Caco-2 (cell line): ENCODE measurements at regions of chr7 and their contacts with region 1.

Region 1: GRCh38 chr7:70040970-70041766 is 442.9 kb downstream of the AUTS2 start:
- DNase-seq: no peak
- H3K4me3 ChIP-seq: no peak overlapping the region
- H3K4me3 Mint-ChIP-seq: no peak overlapping the region
- H3K27ac Mint-ChIP-seq: no peak overlapping the region
- H3K4me1 ChIP-seq: no peaks in the 10 kb centered on the region
- H3K4me1 Mint-ChIP-seq: no peaks in the 10 kb centered on the region
- H3K27me3 ChIP-seq: no peaks in the 10 kb centered on the region
- H3K27me3 Mint-ChIP-seq: peaks cover 5% of the 10 kb centered on the region
- CTCF ChIP-seq: peak in 1 of 2 experiments; percentile 32

Region 2: GRCh38 chr7:69775231-69775771 is 265.9 kb before region 1 on chr7:
- CTCF ChIA-PET with region 1: no interaction called
- POLR2A ChIA-PET with region 1: no interaction called
- intact Hi-C with region 1: no loop called
- DNase-seq: no peak
- H3K4me3 ChIP-seq: no peak overlapping the region
- H3K4me3 Mint-ChIP-seq: no peak overlapping the region
- H3K27ac Mint-ChIP-seq: no peak overlapping the region
- H3K4me1 ChIP-seq: peaks cover 5% of the 10 kb centered on the region
- H3K4me1 Mint-ChIP-seq: peaks cover 9% of the 10 kb centered on the region
- H3K27me3 ChIP-seq: no peaks in the 10 kb centered on the region
- H3K27me3 Mint-ChIP-seq: no peaks in the 10 kb centered on the region
- CTCF ChIP-seq: no peak

Region 3: GRCh38 chr7:69932034-69932628 is 109.0 kb before region 1 on chr7:
- CTCF ChIA-PET with region 1: no interaction called
- POLR2A ChIA-PET with region 1: no interaction called
- intact Hi-C with region 1: loop called (anchors 1 kb)
- DNase-seq: peak in 1 of 2 experiments; percentile 20
- H3K4me3 ChIP-seq: no peak overlapping the region
- H3K4me3 Mint-ChIP-seq: no peak overlapping the region
- H3K27ac Mint-ChIP-seq: no peak overlapping the region
- H3K4me1 ChIP-seq: no peaks in the 10 kb centered on the region
- H3K4me1 Mint-ChIP-seq: no peaks in the 10 kb centered on the region
- H3K27me3 ChIP-seq: no peaks in the 10 kb centered on the region
- H3K27me3 Mint-ChIP-seq: peaks cover 12% of the 10 kb centered on the region
- CTCF ChIP-seq: peak; percentile 50 to 69

Region 4: GRCh38 chr7:70143075-70144044 is 102.2 kb after region 1 on chr7:
- CTCF ChIA-PET with region 1: no interaction called
- POLR2A ChIA-PET with region 1: no interaction called
- intact Hi-C with region 1: no loop called
- DNase-seq: no peak
- H3K4me3 ChIP-seq: no peak overlapping the region
- H3K4me3 Mint-ChIP-seq: no peak overlapping the region
- H3K27ac Mint-ChIP-seq: no peak overlapping the region
- H3K4me1 ChIP-seq: no peaks in the 10 kb centered on the region
- H3K4me1 Mint-ChIP-seq: no peaks in the 10 kb centered on the region
- H3K27me3 ChIP-seq: no peaks in the 10 kb centered on the region
- H3K27me3 Mint-ChIP-seq: peaks cover 8% of the 10 kb centered on the region
- CTCF ChIP-seq: no peak